ENCODE measurements at regions of chr3 and their contacts with region 1.

Region 1: DNA sequence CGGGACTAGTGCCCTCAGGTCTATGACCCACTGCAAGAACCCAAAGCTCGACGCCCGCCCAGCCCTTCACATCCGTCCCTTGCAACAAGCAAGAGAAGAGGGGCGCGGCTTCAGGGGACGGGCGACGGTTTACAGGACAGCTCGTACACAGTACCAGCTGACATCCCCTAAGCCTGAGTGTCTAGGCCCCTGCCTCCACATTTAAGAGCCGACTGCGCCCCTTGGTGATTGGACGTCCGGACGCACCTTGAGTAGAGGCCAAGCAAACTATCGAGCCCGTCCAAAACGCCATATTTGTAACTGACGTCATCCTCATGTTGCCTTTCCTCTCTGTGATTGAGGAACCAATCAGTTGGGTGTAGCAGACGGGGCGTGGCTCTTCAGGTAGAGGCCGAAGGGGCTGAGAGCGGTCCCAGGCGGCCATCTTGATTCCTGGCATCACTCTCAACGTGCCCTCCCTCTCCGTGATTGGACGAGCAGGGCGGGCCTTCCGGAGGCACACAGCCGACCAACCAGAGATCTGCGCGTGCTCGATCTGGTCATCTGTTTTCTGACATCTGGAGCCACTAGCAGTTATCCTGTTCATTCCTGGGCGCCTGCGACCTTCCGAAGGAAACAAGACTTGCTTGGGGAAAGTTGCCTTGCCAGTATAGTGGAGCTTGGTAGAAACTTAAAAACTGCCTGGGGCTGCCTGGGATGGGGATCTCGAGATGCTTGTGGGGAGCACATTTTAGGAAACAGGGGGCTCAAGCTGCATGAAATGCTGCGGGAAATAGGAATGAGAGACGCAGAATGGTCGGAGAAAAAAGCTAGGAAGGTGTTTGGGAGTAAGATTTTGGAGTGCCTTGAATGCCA is 4.0 kb upstream of the RPL14 start:
- DNase-seq: peak; percentile 93 to 99 (median 98)
- H3K4me3 ChIP-seq: peak overlapping the region; percentile 56 to 95 (median 81)
- H3K27ac ChIP-seq: peak overlapping the region; percentile 39 to 99 (median 95)
- H3K27me3 ChIP-seq: no peaks in the 10 kb centered on the region
- CTCF ChIP-seq: peak in 31 of 56 donors; percentile 2 to 52 (median 22)

Region 2: DNA sequence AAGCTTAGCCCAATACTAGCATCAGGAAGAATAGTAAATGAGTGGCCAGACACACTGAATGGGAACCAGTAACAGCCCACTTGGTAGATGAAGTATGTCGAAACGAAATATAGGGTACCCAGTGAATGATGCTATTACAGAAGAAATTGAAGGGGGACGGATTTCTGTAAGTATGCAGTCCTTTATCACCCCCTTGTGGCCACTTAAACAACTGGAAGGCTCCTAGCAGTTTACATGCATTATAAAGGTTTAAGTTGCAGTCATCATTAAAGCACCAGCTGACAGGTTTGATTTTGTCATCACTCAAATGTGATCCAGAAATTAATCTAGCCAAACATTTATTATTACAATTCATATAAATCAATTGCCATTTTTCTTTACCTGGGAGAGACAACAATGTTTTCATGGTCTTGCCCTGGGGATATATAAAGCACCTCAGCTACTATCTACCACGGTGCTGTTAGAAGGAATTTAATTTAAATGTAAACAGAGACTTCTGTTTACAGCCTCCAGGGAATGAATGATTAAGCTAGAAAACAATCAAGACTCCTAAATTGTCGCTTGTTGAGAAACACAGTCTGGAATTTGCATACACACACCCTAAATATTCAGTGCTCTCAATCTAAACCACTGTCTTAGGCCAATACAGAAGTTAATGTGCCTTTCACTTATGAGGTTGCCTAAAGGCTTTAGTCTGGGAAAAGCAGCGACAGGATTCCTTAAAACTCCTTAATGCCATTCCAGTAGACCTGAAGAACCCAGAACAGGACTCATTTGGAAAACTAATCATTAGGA is 135.8 kb before region 1 on chr3:
- intact Hi-C with region 1: loop called in 1 of 2 experiments (anchors 10 kb)
- DNase-seq: peak in 3 of 10 donors; percentile 15 to 62 (median 40)
- H3K4me3 ChIP-seq: peak overlapping the region in 1 of 59 donors; percentile 17
- H3K27ac ChIP-seq: peak overlapping the region in 9 of 59 donors; percentile 0 to 52 (median 19)
- H3K27me3 ChIP-seq: no peaks in the 10 kb centered on the region
- CTCF ChIP-seq: peak; percentile 79 to 99 (median 89)

Region 3: DNA sequence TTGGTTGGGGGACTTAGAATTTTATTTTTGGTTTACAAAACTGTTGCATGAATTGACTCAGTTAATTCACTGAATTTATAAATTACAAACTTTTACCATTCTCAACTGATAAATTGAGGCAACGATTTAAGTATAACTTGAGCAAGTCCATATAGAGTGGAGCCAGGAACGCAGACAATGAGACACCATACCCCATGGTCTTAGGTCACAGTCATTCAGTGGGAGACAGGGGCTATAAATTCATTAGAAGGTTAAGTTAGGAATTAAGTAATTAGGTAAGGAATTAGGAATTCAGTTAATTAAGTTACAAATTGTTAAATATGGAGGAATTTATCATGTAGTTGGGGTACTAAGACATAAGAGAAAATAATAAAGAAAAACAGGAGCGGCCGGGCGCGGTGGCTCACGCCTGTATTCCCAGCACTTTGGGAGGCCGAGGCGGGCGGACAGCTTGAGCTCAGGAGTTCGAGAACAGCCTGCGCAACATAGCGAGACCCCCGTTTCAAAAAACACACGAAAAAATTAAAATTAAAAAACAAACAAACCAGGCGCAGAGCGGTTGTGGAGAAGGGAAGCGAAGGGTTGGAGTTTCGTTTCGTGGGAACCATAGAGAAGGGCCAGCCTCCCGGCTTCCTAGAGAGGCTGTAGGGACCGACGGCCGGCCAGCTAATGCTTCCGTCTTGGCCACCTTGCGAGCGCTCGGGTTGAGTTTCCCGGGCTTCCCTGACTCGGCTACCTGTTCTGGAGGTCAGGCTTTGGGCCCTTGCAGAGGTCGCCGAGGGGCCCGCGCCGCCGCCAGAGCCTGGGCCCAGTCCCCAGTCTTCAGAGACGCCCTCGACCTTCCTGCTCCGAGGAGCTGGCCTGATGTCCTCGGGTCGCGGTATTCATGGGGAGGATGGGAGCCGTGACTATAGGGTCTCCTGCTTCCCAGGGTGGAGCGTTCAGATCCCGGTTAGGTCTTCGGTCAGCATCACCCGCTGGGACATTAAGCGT is 23.7 kb after region 1 on chr3 and contains the start of gene ZNF619:
- intact Hi-C with region 1: loop called (anchors 1 to 2 kb)
- DNase-seq: peak; percentile 52 to 78 (median 68)
- H3K4me3 ChIP-seq: peak within 1 kb of the TSS; percentile 60 to 98 (median 87)
- H3K27ac ChIP-seq: peak within 1 kb of the TSS in 55 of 59 donors; percentile 8 to 94 (median 72)
- H3K27me3 ChIP-seq: no peaks in the 10 kb centered on the region
- CTCF ChIP-seq: peak in 15 of 56 donors; percentile 7 to 33 (median 17)
- total RNA-seq, gene ZNF619: 3.6 to 15.9 (median 7.6) TPM

Region 4: DNA sequence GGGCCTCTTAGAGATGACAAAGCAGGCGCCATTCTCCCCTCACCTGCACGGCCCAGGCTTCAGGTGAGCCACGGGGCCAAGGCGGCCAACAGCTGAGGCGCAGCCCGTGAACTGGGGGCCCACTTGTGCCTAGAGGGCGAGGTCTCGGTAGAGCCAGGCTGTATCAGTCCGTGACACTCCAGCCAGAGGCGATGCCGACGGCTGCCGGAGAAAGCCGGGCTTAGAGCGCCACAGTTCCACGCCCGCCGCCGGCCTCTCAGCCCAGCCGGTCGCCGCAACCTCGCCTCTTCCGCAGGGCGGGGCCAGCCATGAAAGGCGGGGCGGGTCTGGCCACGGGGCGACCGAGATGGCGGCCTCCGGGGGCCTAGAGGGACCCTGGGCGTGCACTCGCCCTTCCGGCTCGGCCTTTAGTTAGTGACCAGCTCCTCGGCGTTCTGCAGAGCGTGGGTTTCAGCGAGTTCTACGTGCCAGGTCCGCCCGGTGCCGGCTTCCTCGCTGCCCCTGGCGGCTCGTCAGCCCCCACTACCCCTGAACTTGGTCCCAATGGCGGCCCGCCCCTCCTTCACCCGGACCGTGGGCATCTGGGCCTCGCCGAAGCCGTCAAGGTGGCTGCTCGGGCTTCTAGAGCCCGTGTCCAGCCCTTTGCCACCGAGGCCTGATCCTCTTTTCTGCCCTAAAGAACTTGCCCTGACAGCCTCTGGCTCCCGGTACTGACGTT is 71.6 kb after region 1 on chr3 and contains the start of gene ZNF621:
- intact Hi-C with region 1: loop called (anchors 2 to 5 kb)
- DNase-seq: peak; percentile 74 to 95 (median 87)
- H3K4me3 ChIP-seq: peak within 1 kb of the TSS; percentile 51 to 98 (median 83)
- H3K27ac ChIP-seq: peak within 1 kb of the TSS; percentile 61 to 98 (median 93)
- H3K27me3 ChIP-seq: no peaks in the 10 kb centered on the region
- CTCF ChIP-seq: peak in 44 of 56 donors; percentile 11 to 64 (median 36)
- total RNA-seq, gene ZNF621: 15.7 to 46.1 (median 28.3) TPM

Region 5: GRCh38 chr3:41961750-41962679 is 1508.9 kb after region 1 on chr3 and contains the start of gene ULK4:
- intact Hi-C with region 1: loop called (anchors 10 kb)
- DNase-seq: peak; percentile 93 to 98 (median 98)
- H3K4me3 ChIP-seq: peak within 1 kb of the TSS; percentile 68 to 99 (median 92)
- H3K27ac ChIP-seq: peak within 1 kb of the TSS in 50 of 59 donors; percentile 30 to 84 (median 64)
- H3K27me3 ChIP-seq: no peaks in the 10 kb centered on the region
- CTCF ChIP-seq: peak in 14 of 56 donors; percentile 4 to 43 (median 19)
- total RNA-seq, gene ULK4: 7.7 to 29.9 (median 14.8) TPM